ENCODE measurements at regions of chr1 and their contacts with region 1.

Region 1: GRCh38 chr1:200780545-200781369 is 42.1 kb downstream of the CAMSAP2 start:
- DNase-seq: peak; percentile 43
- ATAC-seq: peak; percentile 63
- H3K4me3 ChIP-seq: peak overlapping the region; percentile 45; the same call in 1 of the 2 replicates
- H3K27ac ChIP-seq: no peak overlapping the region
- H3K4me1 ChIP-seq: peaks cover 10% of the 10 kb centered on the region
- H3K27me3 ChIP-seq: no peaks in the 10 kb centered on the region
- CTCF ChIP-seq: no peak
- POLR2A ChIP-seq: no peak
- RAD21 ChIP-seq: no peak

Region 2: GRCh38 chr1:200669314-200670241 is 111.2 kb before region 1 on chr1 and contains the start of gene DDX59:
- CTCF ChIA-PET with region 1: no interaction called
- POLR2A ChIA-PET with region 1: no interaction called
- dilution Hi-C with region 1: no loop called
- in situ Hi-C with region 1: no loop called
- intact Hi-C with region 1: loop called (anchors 5 kb)
- DNase-seq: peak; percentile 96
- ATAC-seq: peak; percentile 91
- H3K4me3 ChIP-seq: peak within 1 kb of the TSS; percentile 76
- H3K27ac ChIP-seq: peak within 1 kb of the TSS; percentile 87
- H3K4me1 ChIP-seq: peaks cover 3% of the 10 kb centered on the region; the same call in 1 of the 2 replicates
- H3K27me3 ChIP-seq: no peaks in the 10 kb centered on the region
- CTCF ChIP-seq: no peak
- POLR2A ChIP-seq: peak; percentile 97
- RAD21 ChIP-seq: no peak; the same call in 1 of the 2 replicates
- total RNA-seq, gene DDX59: 9.1 and 11.1 TPM in 2 replicates

Region 3: DNA sequence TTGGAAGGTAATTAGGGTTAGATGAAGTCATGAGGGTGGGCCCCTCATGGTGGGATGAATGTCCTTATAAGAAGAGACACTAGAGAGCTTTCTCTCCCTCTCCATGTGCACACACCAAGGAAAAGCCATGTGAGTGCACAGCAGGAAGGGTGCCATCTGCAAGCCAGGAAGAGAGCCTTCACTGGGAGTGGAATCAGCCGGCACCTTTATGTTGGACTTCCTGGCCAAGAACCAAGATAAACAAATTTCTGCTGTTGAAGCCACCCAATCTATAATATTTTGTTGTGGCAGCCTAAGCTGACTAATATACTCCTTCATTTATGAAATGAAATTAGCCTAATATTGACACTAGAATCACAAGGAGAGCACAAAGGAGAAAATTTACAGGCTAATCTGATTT is 464.3 kb after region 1 on chr1:
- CTCF ChIA-PET with region 1: no interaction called
- POLR2A ChIA-PET with region 1: no interaction called
- dilution Hi-C with region 1: no loop called
- in situ Hi-C with region 1: no loop called
- intact Hi-C with region 1: no loop called
- DNase-seq: no peak
- ATAC-seq: no peak
- H3K4me3 ChIP-seq: no peak overlapping the region
- H3K27ac ChIP-seq: no peak overlapping the region
- H3K4me1 ChIP-seq: no peaks in the 10 kb centered on the region
- H3K27me3 ChIP-seq: peaks cover 25% of the 10 kb centered on the region
- CTCF ChIP-seq: no peak
- POLR2A ChIP-seq: no peak
- RAD21 ChIP-seq: no peak